ENCODE measurements at regions of chr17 and their contacts with region 1.

Region 1: GRCh38 chr17:1055751-1056645 is 59.1 kb downstream of the TIMM22 start:
- DNase-seq: peak; percentile 64 to 88
- ATAC-seq: peak; percentile 68 to 89
- H3K4me3 ChIP-seq: no peak overlapping the region
- H3K27ac ChIP-seq: no peak overlapping the region
- H3K4me1 ChIP-seq: peaks cover 5% of the 10 kb centered on the region
- CTCF ChIP-seq: peak; percentile 64
- EP300 ChIP-seq: no peak
- POLR2A ChIP-seq: no peak
- RAD21 ChIP-seq: peak; percentile 63 to 67

Region 2: DNA sequence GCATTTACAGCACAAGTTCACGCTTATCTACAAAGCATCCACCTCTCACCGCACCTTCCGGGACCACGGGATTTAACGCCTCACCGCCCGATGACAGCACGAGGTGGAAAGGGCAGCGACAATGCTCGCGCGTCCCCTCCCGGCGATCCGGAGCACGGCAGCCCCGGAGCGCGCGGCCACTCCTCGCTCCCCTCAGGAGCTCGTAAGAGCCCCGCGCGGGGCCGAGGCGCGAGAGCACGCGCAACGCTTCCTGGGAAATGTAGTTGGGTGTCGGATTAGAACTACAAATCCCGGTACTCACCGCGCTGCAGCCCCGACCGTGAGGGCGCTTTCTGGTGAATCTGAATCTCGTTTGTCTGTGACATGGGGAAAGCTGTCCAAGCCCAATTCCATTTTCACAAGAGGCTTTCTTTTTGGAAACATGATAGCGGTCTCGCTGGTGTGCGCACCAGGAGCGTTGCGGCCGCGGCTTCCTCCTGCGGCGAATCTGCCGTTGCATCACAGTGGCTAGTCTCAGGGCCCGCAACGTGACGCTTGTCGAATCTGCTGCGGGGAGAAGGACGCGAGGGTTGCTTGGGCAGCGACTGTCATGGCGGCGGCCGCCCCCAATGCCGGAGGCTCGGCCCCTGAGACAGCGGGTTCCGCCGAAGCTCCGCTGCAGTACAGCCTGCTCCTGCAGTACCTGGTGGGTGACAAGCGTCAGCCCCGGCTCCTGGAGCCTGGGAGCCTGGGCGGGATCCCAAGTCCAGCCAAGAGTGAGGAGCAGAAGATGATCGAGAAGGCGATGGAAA is 59.2 kb before region 1 on chr17 and contains the start of gene TIMM22:
- CTCF ChIA-PET with region 1: interaction called, 49 read pairs
- POLR2A ChIA-PET with region 1: no interaction called
- DNase-seq: peak; percentile 98 to 100
- ATAC-seq: peak; percentile 97 to 98
- H3K4me3 ChIP-seq: peak within 1 kb of the TSS; percentile 88
- H3K27ac ChIP-seq: peak within 1 kb of the TSS; percentile 84 to 93
- H3K4me1 ChIP-seq: peaks cover 24% of the 10 kb centered on the region
- CTCF ChIP-seq: peak; percentile 97
- EP300 ChIP-seq: no peak
- POLR2A ChIP-seq: peak; percentile 92
- RAD21 ChIP-seq: peak; percentile 95 to 97
- polyA plus RNA-seq, gene TIMM22: 14.7 and 15.8 TPM in 2 replicates

Region 3: GRCh38 chr17:1029196-1029921 is 26.6 kb before region 1 on chr17:
- CTCF ChIA-PET with region 1: interaction called, 14 read pairs
- POLR2A ChIA-PET with region 1: no interaction called
- DNase-seq: no peak
- ATAC-seq: peak in 1 of 2 experiments; percentile 13; a peak in 2 of 6 replicates
- H3K4me3 ChIP-seq: no peak overlapping the region
- H3K27ac ChIP-seq: no peak overlapping the region
- H3K4me1 ChIP-seq: no peaks in the 10 kb centered on the region
- CTCF ChIP-seq: no peak
- EP300 ChIP-seq: no peak
- POLR2A ChIP-seq: no peak
- RAD21 ChIP-seq: no peak

Region 4: GRCh38 chr17:1078831-1079561 is 23.0 kb after region 1 on chr17:
- CTCF ChIA-PET with region 1: interaction called, 23 read pairs
- POLR2A ChIA-PET with region 1: no interaction called
- DNase-seq: no peak
- ATAC-seq: no peak
- H3K4me3 ChIP-seq: no peak overlapping the region
- H3K27ac ChIP-seq: no peak overlapping the region; a peak in 1 of 6 replicates
- H3K4me1 ChIP-seq: peaks cover 34% of the 10 kb centered on the region
- CTCF ChIP-seq: no peak
- EP300 ChIP-seq: no peak
- POLR2A ChIP-seq: no peak
- RAD21 ChIP-seq: no peak

Region 5: DNA sequence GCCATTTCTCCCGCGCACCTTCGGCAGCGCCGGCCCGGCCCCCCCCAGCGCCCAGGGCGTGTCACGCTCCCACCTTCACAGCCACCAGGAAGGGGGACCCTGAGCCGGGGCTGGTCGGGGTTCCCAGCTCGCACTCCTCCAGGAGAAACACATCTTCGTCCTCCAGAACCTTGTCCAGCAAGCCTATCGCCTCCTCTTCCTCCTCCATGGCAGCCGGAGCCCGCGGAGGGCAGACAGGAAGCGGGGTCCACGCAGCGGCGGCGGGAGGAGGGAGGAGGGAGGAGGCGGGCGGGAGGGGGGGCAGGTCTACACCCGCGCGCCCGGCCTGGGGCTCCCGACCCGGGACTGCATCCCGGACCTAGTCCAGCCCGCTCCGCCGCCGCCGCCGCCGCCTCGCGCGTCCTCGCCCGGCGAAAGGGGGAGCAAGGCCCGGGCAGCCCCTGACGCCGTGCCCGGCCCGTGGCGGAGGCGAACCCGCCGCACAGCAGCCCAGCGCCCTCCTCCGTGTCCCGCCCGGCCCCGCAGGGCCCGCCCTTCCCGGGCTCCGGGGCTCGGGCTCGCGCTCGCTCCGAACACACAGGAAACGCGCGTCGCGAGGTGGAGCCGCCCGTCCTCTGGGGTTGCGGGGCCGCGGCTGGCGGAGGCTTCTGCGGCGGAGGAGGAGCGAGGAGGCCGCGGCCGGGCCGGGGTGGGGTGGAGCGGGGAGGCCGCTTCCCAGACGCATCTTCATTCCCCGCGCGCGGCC is 53.0 kb after region 1 on chr17:
- CTCF ChIA-PET with region 1: interaction called, 23 read pairs
- POLR2A ChIA-PET with region 1: no interaction called
- DNase-seq: peak; percentile 48 to 66
- ATAC-seq: peak; percentile 39 to 40
- H3K4me3 ChIP-seq: peak overlapping the region; percentile 80
- H3K27ac ChIP-seq: peak overlapping the region; percentile 98 to 99
- H3K4me1 ChIP-seq: peaks cover 45% of the 10 kb centered on the region
- CTCF ChIP-seq: no peak
- EP300 ChIP-seq: no peak
- POLR2A ChIP-seq: peak; percentile 45
- RAD21 ChIP-seq: no peak

Region 6: GRCh38 chr17:1147661-1148060 is 91.7 kb after region 1 on chr17:
- CTCF ChIA-PET with region 1: interaction called, 177 read pairs
- POLR2A ChIA-PET with region 1: interaction called, 7 read pairs
- DNase-seq: peak; percentile 87 to 88
- ATAC-seq: peak; percentile 86 to 92
- H3K4me3 ChIP-seq: no peak overlapping the region
- H3K27ac ChIP-seq: peak overlapping the region in 1 of 2 experiments; percentile 39; a peak in 2 of 6 replicates
- H3K4me1 ChIP-seq: 0 out of 3 replicates have a peak, but pooled peaks cover 5% of the 10 kb centered on the region
- CTCF ChIP-seq: peak; percentile 74
- EP300 ChIP-seq: no peak
- POLR2A ChIP-seq: no peak
- RAD21 ChIP-seq: peak; percentile 86 to 93

Region 7: DNA sequence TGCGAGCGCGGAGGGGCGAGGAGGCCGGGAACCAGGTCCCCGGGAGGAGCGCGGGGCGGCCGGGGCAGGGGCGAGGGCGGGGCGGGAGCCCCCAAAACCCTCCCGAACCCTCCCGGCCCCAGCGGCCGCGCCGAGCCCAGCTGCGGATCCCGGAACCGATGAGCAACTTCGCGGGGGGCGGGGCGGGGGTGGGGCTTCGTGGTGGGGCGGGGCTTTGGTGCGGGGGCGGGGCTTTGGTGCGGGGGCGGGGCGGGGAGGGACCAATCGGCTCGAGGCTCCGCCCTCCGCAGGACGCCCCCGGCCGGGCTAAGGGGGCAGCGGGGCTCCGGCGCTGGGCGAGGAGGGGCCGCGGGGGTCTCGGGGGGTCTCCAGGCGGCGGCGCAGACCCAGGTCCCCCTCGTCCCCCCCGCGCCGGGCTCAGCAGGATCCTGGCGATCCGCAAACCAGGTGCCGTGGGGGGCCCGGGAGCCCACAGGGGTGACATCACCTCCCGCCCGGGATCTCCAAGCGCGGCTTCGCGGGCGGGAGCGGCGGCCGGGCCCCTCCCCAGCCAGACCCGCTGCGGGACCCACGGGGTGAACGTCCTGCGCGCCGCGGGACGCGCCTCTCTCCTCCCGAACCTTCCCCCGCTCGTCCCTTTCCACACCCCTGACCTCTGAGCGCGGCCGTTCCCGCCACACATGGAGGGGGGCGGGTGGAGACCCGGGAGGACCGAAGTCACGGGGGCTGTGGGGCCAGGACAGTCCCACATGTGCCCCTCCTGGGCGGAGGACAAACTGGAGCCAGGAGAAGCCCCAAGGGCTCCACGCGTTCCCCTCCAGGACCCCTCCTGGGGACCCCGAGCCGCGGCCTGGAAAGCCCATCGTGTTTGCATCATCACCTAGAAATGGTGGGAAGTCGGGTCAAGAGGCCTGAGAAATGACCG is 124.1 kb after region 1 on chr17 and contains the start of gene ABR:
- CTCF ChIA-PET with region 1: interaction called, 13 read pairs
- POLR2A ChIA-PET with region 1: no interaction called
- DNase-seq: no peak
- ATAC-seq: peak; percentile 25 to 43; a peak in 5 of 6 replicates
- H3K4me3 ChIP-seq: peak within 1 kb of the TSS; percentile 86
- H3K27ac ChIP-seq: peak within 1 kb of the TSS; percentile 80 to 91
- H3K4me1 ChIP-seq: peaks cover 6% of the 10 kb centered on the region; the same call in 1 of the 3 replicates
- CTCF ChIP-seq: no peak
- EP300 ChIP-seq: no peak
- POLR2A ChIP-seq: no peak; the same call in 1 of the 2 replicates
- RAD21 ChIP-seq: no peak
- polyA plus RNA-seq, gene ABR: 62.5 and 70.9 TPM in 2 replicates